CD8-positive, alpha-beta T cell (primary cell): ENCODE measurements at regions of chr20 and their contacts with region 1.

Region 1: DNA sequence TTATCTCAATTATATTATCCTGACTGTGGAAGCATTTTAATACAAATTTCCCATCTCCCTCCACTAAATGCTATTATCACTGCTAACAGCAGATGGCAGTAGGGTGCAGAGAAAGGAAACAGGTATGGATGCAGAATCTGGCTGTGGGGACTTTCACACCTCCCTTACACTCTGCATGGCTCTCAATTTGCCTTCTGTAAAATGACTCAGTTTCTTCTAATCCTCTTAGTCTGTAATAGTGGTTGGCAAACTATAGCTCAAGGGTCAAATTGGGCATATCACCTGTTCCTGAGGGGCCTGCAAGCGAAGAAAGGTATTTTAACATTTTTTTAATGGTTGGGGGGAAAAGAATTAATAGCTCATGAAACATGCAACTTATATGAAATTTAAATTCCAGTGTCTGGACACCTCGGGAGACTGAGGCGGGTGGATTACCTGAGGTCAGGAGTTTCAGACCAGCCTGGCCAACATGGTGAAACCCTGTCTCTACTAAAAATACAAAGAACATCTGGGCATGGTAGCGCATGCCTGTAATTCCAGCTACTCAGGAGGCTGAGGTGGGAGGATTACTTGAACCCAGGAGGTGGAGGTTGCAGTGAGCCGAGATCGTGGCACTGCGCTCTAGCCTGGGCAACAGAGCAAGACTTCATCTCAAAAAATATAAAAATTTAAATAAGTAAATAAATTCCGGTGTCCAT is 83.5 kb downstream of the ZMYND8 start:
- DNase-seq: peak in 8 of 9 experiments; percentile 1 to 77 (median 46)
- ATAC-seq: peak; percentile 85
- H3K4me3 ChIP-seq: no peak overlapping the region
- H3K4me3 Mint-ChIP-seq: no peak overlapping the region
- H3K27ac ChIP-seq: no peak overlapping the region
- H3K27ac Mint-ChIP-seq: peak overlapping the region; percentile 66
- H3K4me1 ChIP-seq: no peaks in the 10 kb centered on the region
- H3K4me1 Mint-ChIP-seq: peaks cover 12% of the 10 kb centered on the region
- H3K27me3 ChIP-seq: no peaks in the 10 kb centered on the region
- H3K27me3 Mint-ChIP-seq: no peaks in the 10 kb centered on the region
- CTCF ChIP-seq: peak; percentile 93

Region 2: GRCh38 chr20:47196091-47197081 is 76.7 kb before region 1 on chr20:
- CTCF ChIA-PET with region 1: interaction called, 13 read pairs
- POLR2A ChIA-PET with region 1: no interaction called
- intact Hi-C with region 1: loop called in 1 of 2 experiments (anchors 1 kb)
- DNase-seq: peak; percentile 38 to 76 (median 71)
- ATAC-seq: peak; percentile 81
- H3K4me3 ChIP-seq: no peak overlapping the region
- H3K4me3 Mint-ChIP-seq: no peak overlapping the region
- H3K27ac ChIP-seq: no peak overlapping the region
- H3K27ac Mint-ChIP-seq: no peak overlapping the region
- H3K4me1 ChIP-seq: no peaks in the 10 kb centered on the region
- H3K4me1 Mint-ChIP-seq: peaks cover 4% of the 10 kb centered on the region
- H3K27me3 ChIP-seq: peaks cover 0 to 2% of the 10 kb centered on the region in 2 experiments
- H3K27me3 Mint-ChIP-seq: peaks cover 3% of the 10 kb centered on the region
- CTCF ChIP-seq: peak; percentile 90

Region 3: DNA sequence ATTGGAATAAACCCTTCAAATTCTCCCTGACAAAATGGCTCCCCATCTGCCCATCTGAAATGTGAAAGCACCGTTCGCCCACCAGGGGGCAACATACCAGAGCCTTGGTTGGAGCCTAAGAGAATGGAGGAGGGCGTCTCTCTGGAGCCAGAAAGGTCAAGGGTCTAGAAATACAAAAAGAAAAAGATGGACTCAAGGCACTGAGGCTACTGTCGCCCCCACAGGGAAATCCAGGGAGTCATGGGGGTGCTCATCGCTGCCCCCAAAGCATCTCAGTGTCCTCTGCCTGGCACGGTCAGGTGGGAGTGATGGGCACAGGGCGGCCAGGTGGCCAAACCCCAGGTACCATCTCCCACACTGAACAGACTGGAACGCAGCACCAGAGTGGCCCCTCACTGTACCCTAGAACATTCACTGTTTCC is 52.9 kb before region 1 on chr20:
- CTCF ChIA-PET with region 1: interaction called, 12 read pairs
- POLR2A ChIA-PET with region 1: no interaction called
- intact Hi-C with region 1: no loop called
- DNase-seq: peak; percentile 7 to 60 (median 46)
- ATAC-seq: peak; percentile 36
- H3K4me3 ChIP-seq: no peak overlapping the region
- H3K4me3 Mint-ChIP-seq: no peak overlapping the region
- H3K27ac ChIP-seq: no peak overlapping the region
- H3K27ac Mint-ChIP-seq: peak overlapping the region; percentile 70
- H3K4me1 ChIP-seq: no peaks in the 10 kb centered on the region
- H3K4me1 Mint-ChIP-seq: peaks cover 2% of the 10 kb centered on the region
- H3K27me3 ChIP-seq: no peaks in the 10 kb centered on the region
- H3K27me3 Mint-ChIP-seq: no peaks in the 10 kb centered on the region
- CTCF ChIP-seq: peak; percentile 66

Region 4: DNA sequence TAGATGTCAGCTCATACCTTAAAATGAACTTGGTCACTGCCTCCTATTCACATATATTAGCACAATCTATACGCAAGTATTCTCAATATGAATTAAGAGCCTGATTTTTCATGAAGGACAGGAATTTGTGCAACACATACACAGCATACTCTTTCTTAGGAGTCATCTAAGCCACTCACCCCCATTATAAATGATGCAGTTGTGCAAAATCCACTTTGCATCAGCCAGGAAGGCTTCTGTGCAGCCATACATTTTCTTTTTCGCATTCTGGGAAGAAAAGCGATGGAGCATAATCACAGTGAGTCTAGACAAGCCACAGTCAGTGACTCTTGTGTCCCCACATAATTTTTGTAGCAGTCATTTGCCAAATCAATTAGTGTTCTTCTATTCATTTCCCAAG is 17.0 kb after region 1 on chr20:
- CTCF ChIA-PET with region 1: interaction called, 33 read pairs
- POLR2A ChIA-PET with region 1: no interaction called
- intact Hi-C with region 1: no loop called
- DNase-seq: no peak
- ATAC-seq: no peak
- H3K4me3 ChIP-seq: no peak overlapping the region
- H3K4me3 Mint-ChIP-seq: no peak overlapping the region
- H3K27ac ChIP-seq: no peak overlapping the region
- H3K27ac Mint-ChIP-seq: no peak overlapping the region
- H3K4me1 ChIP-seq: no peaks in the 10 kb centered on the region
- H3K4me1 Mint-ChIP-seq: no peaks in the 10 kb centered on the region
- H3K27me3 ChIP-seq: no peaks in the 10 kb centered on the region
- H3K27me3 Mint-ChIP-seq: no peaks in the 10 kb centered on the region
- CTCF ChIP-seq: no peak

Region 5: DNA sequence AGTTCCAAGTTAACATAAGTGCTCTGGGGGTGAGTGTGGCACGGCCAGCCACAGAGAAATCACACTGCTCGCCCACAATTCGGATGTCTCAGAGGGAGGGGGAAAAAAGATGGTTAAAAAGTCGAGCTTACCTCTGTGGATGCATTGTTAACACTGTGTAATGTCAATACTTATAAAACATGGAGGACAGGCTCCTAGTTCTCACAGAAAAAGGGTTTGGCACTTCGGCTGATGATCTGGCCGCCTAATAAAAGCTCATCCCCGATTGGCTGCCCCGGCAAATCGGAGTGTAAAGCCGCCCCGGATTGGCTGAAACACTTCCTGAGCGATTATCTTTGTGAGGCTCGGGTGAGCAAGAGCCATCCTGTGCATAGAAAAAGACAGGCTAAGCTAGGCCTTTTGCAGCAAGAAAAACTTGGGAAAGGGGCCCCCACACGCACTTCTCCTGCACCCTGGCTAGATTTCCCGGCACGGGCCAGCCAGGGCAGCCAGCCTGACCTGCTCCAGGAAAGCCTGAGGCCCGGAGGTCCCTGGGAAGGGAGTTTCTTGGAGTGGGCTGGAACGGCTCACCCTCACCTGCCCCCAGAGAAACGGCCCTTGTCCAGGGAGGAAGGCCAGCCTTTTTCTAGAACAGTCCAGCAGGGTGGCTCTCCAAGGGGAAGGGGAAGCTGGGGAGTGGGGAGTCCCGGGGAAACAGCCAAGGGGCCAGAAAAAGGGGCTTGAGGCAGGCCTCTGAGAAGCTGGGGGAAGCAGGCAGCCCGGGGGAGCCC is 83.7 kb after region 1 on chr20 and contains the start of gene ZMYND8:
- CTCF ChIA-PET with region 1: interaction called, 36 read pairs
- POLR2A ChIA-PET with region 1: interaction called, 4 read pairs
- intact Hi-C with region 1: no loop called
- DNase-seq: peak; percentile 90 to 100 (median 95)
- ATAC-seq: peak; percentile 90
- H3K4me3 ChIP-seq: peak within 1 kb of the TSS; percentile 53 to 55
- H3K4me3 Mint-ChIP-seq: peak within 1 kb of the TSS; percentile 82
- H3K27ac ChIP-seq: peak within 1 kb of the TSS; percentile 75 to 76
- H3K27ac Mint-ChIP-seq: peak within 1 kb of the TSS; percentile 100
- H3K4me1 ChIP-seq: peaks cover 70% of the 10 kb centered on the region
- H3K4me1 Mint-ChIP-seq: peaks cover 38% of the 10 kb centered on the region
- H3K27me3 ChIP-seq: no peaks in the 10 kb centered on the region
- H3K27me3 Mint-ChIP-seq: no peaks in the 10 kb centered on the region
- CTCF ChIP-seq: no peak
- total RNA-seq, gene ZMYND8: 23.2 to 27.0 TPM

Region 6: GRCh38 chr20:47392015-47392720 is 119.1 kb after region 1 on chr20:
- CTCF ChIA-PET with region 1: interaction called, 661 read pairs
- POLR2A ChIA-PET with region 1: no interaction called
- intact Hi-C with region 1: no loop called
- DNase-seq: peak in 1 of 9 experiments; percentile 27
- ATAC-seq: no peak
- H3K4me3 ChIP-seq: no peak overlapping the region
- H3K4me3 Mint-ChIP-seq: no peak overlapping the region
- H3K27ac ChIP-seq: no peak overlapping the region
- H3K27ac Mint-ChIP-seq: no peak overlapping the region
- H3K4me1 ChIP-seq: no peaks in the 10 kb centered on the region
- H3K4me1 Mint-ChIP-seq: no peaks in the 10 kb centered on the region
- H3K27me3 ChIP-seq: no peaks in the 10 kb centered on the region
- H3K27me3 Mint-ChIP-seq: no peaks in the 10 kb centered on the region
- CTCF ChIP-seq: no peak